CD4-positive, alpha-beta T cell (primary cell): ENCODE measurements at regions of chr4 and their contacts with region 1.

Region 1: GRCh38 chr4:2787230-2788088 is 5.4 kb upstream of the SH3BP2 start:
- DNase-seq: peak in 8 of 14 experiments; percentile 38 to 81 (median 50)
- ATAC-seq: peak; percentile 49
- H3K4me3 ChIP-seq: no peak overlapping the region
- H3K4me3 Mint-ChIP-seq: peak overlapping the region; percentile 54
- H3K27ac ChIP-seq: peak overlapping the region; percentile 86 to 87
- H3K27ac Mint-ChIP-seq: peak overlapping the region; percentile 93
- H3K4me1 ChIP-seq: peaks cover 66% of the 10 kb centered on the region
- H3K4me1 Mint-ChIP-seq: peaks cover 47% of the 10 kb centered on the region
- H3K27me3 ChIP-seq: no peaks in the 10 kb centered on the region
- H3K27me3 Mint-ChIP-seq: no peaks in the 10 kb centered on the region
- CTCF ChIP-seq: no peak

Region 2: GRCh38 chr4:2800691-2801596 is 13.5 kb after region 1 on chr4:
- CTCF ChIA-PET with region 1: no interaction called
- POLR2A ChIA-PET with region 1: interaction called, 24 read pairs
- intact Hi-C with region 1: no loop called
- DNase-seq: peak in 5 of 14 experiments; percentile 23 to 79 (median 41)
- ATAC-seq: no peak
- H3K4me3 ChIP-seq: peak overlapping the region; percentile 52
- H3K4me3 Mint-ChIP-seq: peak overlapping the region; percentile 51
- H3K27ac ChIP-seq: peak overlapping the region in 1 of 2 donors; percentile 37
- H3K27ac Mint-ChIP-seq: peak overlapping the region; percentile 70
- H3K4me1 ChIP-seq: peaks cover 86% of the 10 kb centered on the region
- H3K4me1 Mint-ChIP-seq: peaks cover 31% of the 10 kb centered on the region
- H3K27me3 ChIP-seq: no peaks in the 10 kb centered on the region
- H3K27me3 Mint-ChIP-seq: no peaks in the 10 kb centered on the region
- CTCF ChIP-seq: no peak